Endothelial cell of umbilical vein (primary cell): ENCODE measurements at regions of chr1 and their contacts with region 1.

Region 1: GRCh38 chr1:30718636-30719405 is 4.6 kb downstream of the MATN1 start:
- DNase-seq: peak; percentile 96
- H3K4me3 ChIP-seq: peak overlapping the region; percentile 10 to 66 (median 27)
- H3K27ac ChIP-seq: peak overlapping the region; percentile 78
- H3K4me1 ChIP-seq: peaks cover 5% of the 10 kb centered on the region
- H3K27me3 ChIP-seq: no peaks in the 10 kb centered on the region
- CTCF ChIP-seq: peak; percentile 92 to 94
- POLR2A ChIP-seq: peak; percentile 72

Region 2: DNA sequence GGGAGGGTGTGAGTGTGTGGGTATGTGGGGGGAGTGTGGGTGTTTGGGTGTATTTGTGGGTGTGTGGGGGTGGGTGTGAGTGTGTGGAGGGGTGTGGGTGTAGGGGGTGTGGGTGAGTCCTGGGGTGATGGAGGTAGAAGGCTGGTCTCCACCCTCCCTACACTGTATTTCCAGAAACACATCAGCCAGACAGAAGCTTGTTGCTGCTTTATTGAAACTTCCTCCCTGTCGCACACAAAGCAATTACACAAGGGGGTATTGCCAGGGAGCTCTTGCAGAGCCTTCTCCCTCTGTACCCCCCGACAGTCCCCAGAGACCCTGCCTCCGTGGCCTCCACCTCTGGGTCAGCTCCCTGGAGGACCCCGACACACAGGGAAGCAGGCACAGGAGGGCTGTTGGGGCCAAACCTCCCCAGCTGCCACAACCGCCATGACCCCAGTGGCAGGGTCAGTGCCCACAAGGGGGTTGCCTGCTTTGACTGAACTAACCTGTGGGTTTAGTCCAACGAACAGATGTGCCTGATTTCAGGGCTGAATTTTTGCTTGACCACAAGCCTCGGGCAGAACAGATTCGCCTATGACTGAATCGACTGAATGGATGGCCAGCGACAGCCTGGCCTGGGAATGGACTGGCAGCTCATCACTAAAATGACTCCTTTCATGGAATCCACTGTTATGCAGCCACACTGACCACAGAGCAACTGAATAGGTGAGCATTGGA is 13.6 kb after region 1 on chr1:
- CTCF ChIA-PET with region 1: interaction called, 19 read pairs
- POLR2A ChIA-PET with region 1: no interaction called
- dilution Hi-C with region 1: no loop called
- intact Hi-C with region 1: no loop called
- DNase-seq: no peak
- H3K4me3 ChIP-seq: no peak overlapping the region
- H3K27ac ChIP-seq: no peak overlapping the region
- H3K4me1 ChIP-seq: no peaks in the 10 kb centered on the region
- H3K27me3 ChIP-seq: no peaks in the 10 kb centered on the region
- CTCF ChIP-seq: no peak
- POLR2A ChIP-seq: no peak

Region 3: DNA sequence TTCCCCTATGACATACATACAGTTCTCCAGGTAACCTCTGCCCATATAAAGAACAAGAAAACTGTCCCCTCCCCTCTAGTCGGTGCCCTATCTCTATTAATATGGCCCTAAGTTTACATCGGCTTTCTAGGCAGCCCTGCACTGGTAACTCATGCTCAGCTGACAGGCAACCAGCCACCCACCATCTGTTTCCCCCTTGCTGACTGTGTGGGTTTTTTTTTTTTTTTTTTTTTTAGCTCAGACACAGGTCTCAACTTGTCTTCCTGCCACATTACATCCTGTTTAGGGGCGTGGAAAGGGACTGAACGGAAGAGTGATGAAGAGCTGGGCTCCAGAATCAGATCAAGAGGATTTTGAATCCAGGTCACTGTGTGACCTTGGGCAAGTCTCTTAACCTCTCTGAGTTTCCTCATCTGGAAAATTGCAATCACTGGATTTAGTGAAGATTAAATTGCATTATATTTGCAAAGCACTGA is 24.8 kb after region 1 on chr1:
- CTCF ChIA-PET with region 1: interaction called, 10 read pairs
- POLR2A ChIA-PET with region 1: no interaction called
- dilution Hi-C with region 1: no loop called
- intact Hi-C with region 1: no loop called
- DNase-seq: peak; percentile 17
- H3K4me3 ChIP-seq: no peak overlapping the region
- H3K27ac ChIP-seq: no peak overlapping the region
- H3K4me1 ChIP-seq: peaks cover 16% of the 10 kb centered on the region
- H3K27me3 ChIP-seq: no peaks in the 10 kb centered on the region
- CTCF ChIP-seq: no peak
- POLR2A ChIP-seq: no peak

Region 4: DNA sequence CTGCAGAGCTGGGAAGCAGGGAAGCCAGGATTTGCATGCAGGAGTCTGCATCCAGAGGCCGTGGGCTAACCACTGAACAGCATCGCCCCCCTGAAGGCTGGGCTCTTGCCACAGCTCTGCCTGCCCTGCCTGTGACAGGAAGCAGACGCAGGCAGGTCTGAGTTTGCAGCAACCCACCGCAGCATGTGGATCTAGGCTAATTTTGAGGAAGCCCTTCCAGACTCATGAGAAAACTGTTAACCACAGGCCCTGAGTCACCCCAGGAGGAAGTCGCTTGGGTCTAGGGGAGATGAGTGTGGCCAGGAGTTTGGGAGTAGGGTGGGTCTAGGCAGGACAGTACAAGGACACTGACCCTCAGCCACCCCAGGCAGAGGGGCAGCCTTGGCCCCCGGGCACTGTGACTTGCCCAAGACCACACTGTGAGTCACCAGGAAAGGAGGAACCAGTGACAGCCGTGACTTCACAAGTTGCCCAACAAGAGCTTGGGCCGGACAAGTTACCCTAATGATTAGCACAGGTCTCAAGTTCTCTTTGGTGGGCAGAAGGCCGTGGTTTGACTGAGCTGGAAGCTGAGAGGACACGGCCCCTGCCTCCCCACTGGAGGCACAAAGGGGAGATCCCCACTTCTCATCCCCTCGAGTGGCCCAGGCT is 37.8 kb after region 1 on chr1:
- CTCF ChIA-PET with region 1: interaction called, 9 read pairs
- POLR2A ChIA-PET with region 1: interaction called, 3 read pairs
- dilution Hi-C with region 1: no loop called
- intact Hi-C with region 1: loop called (anchors 1 kb)
- DNase-seq: peak; percentile 49
- H3K4me3 ChIP-seq: peak overlapping the region; percentile 27 to 77 (median 51)
- H3K27ac ChIP-seq: peak overlapping the region; percentile 95
- H3K4me1 ChIP-seq: peaks cover 31% of the 10 kb centered on the region
- H3K27me3 ChIP-seq: no peaks in the 10 kb centered on the region
- CTCF ChIP-seq: no peak
- POLR2A ChIP-seq: no peak

Region 5: DNA sequence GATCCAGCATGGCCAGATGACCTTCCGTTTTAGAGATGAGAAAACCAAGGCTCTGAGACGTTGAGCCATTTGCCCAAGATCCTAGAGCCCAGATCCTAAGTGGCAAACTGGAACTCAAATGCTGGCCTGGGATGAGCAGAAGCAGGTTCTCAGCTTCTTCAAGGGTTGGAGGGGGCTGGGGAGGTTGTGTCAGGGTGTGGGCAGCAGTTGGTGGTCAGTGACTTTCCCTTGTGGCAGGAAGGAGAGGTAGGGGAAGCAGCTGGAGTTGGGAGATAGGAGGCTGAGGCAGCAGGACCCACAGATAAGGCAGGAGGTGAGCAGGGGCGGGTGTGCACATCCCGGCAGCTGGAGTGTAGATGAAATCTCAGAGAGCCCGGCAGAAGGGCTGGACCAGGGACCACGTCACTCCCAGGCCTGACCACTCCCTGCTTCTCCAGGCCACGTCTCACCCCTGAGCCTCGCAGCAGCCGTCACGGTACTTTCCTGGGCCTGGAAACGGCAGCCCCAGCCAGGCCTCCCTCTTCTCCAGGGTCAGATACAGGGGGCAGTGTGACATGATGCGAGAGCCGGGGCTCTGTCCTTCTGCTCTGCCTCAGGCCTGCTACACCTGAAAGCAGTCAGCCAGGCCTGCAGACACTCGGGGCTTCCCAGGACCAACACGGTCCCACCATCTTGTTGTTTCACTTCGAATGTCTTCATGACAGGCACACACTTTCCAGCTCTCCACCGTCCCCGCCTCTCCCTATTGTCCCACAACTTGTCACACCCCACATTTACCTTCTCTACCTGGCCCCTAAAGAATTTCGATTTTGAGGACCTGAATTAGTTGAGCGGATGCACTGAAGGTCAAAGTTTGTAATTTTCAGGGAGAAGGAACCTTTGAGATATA is 50.3 kb after region 1 on chr1:
- CTCF ChIA-PET with region 1: interaction called, 10 read pairs
- POLR2A ChIA-PET with region 1: no interaction called
- dilution Hi-C with region 1: no loop called
- intact Hi-C with region 1: no loop called
- DNase-seq: peak; percentile 23
- H3K4me3 ChIP-seq: no peak overlapping the region
- H3K27ac ChIP-seq: no peak overlapping the region
- H3K4me1 ChIP-seq: no peaks in the 10 kb centered on the region
- H3K27me3 ChIP-seq: peaks cover 2% of the 10 kb centered on the region in 2 experiments
- CTCF ChIP-seq: no peak
- POLR2A ChIP-seq: no peak

Region 6: DNA sequence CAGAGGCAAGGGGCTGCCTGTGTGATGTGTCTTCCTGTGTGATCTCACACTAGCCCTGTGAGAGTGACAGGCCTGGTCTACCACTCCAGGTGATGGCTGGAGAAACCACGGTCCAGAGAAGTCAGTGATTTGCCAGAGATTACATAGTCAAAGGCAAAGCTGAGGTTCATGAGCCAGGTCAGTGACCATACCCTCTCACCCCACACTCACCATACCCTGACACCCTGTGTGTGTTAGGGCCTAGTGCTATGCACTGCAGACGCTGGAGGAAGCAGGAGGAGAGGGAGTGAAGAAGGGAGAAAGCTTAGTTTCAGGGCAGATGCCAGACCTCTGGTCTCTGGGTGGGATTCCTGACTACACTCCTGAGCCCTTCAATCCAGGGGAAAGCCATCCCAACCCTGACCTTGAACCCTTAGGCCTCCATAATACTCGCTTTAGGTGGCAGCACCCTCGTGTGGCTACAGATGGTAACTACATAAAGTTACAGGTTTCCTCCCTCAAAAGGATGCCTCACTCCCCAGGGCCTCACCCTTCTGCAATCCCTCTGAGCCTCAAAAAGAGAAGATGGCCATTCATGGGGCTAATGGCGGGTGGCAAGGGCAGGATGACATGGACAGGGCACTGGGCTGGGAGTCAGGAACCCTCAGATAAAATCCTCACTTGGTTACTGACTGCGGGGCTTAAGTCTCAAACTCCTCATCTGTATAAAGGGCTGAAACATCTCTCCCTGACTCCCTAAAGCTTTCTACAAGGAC is 210.5 kb after region 1 on chr1:
- CTCF ChIA-PET with region 1: interaction called, 9 read pairs
- POLR2A ChIA-PET with region 1: no interaction called
- dilution Hi-C with region 1: no loop called
- intact Hi-C with region 1: loop called (anchors 2 kb)
- DNase-seq: peak; percentile 55
- H3K4me3 ChIP-seq: no peak overlapping the region
- H3K27ac ChIP-seq: no peak overlapping the region
- H3K4me1 ChIP-seq: no peaks in the 10 kb centered on the region
- H3K27me3 ChIP-seq: no peaks in the 10 kb centered on the region
- CTCF ChIP-seq: peak; percentile 64 to 71
- POLR2A ChIP-seq: no peak